AG04449 (cell line): ENCODE measurements at regions of chr5 and their contacts with region 1.

Region 1: GRCh38 chr5:111530298-111530740 is 18.0 kb upstream of the STARD4 start:
- DNase-seq: peak; percentile 68
- H3K4me3 ChIP-seq: no peak overlapping the region
- CTCF ChIP-seq: no peak

Region 2: DNA sequence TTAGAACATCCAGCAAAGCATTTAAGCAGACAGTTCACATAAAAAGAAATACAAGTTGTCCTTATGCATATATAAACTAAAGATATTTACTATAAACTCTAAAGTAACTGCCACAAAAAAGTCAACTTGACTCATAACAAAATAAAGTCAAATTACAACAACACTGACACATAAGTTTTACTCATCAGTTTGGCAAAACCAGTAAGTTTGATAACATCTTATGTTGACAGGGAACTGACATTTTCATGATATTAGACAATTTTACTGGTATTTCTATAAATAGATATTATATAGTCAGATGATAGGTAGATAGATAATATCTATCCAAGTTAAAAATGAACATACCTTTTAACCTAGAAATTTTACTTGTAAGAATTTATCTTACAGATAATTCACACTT is 468.7 kb before region 1 on chr5:
- CTCF ChIA-PET with region 1: no interaction called
- POLR2A ChIA-PET with region 1: no interaction called
- DNase-seq: no peak
- H3K4me3 ChIP-seq: no peak overlapping the region
- CTCF ChIP-seq: no peak

Region 3: GRCh38 chr5:111498346-111498745 is 32.0 kb before region 1 on chr5:
- CTCF ChIA-PET with region 1: interaction called, 14 read pairs
- POLR2A ChIA-PET with region 1: no interaction called
- DNase-seq: no peak
- H3K4me3 ChIP-seq: no peak overlapping the region
- CTCF ChIP-seq: no peak

Region 4: GRCh38 chr5:111512375-111513130 is 17.8 kb before region 1 on chr5 and contains the start of gene STARD4:
- CTCF ChIA-PET with region 1: interaction called, 15 read pairs
- POLR2A ChIA-PET with region 1: no interaction called
- DNase-seq: peak; percentile 80
- H3K4me3 ChIP-seq: peak within 1 kb of the TSS; percentile 87
- CTCF ChIP-seq: no peak

Region 5: GRCh38 chr5:111550279-111551020 is 20.1 kb after region 1 on chr5:
- CTCF ChIA-PET with region 1: interaction called, 34 read pairs
- POLR2A ChIA-PET with region 1: no interaction called
- DNase-seq: peak; percentile 92
- H3K4me3 ChIP-seq: no peak overlapping the region
- CTCF ChIP-seq: peak; percentile 46

Region 6: DNA sequence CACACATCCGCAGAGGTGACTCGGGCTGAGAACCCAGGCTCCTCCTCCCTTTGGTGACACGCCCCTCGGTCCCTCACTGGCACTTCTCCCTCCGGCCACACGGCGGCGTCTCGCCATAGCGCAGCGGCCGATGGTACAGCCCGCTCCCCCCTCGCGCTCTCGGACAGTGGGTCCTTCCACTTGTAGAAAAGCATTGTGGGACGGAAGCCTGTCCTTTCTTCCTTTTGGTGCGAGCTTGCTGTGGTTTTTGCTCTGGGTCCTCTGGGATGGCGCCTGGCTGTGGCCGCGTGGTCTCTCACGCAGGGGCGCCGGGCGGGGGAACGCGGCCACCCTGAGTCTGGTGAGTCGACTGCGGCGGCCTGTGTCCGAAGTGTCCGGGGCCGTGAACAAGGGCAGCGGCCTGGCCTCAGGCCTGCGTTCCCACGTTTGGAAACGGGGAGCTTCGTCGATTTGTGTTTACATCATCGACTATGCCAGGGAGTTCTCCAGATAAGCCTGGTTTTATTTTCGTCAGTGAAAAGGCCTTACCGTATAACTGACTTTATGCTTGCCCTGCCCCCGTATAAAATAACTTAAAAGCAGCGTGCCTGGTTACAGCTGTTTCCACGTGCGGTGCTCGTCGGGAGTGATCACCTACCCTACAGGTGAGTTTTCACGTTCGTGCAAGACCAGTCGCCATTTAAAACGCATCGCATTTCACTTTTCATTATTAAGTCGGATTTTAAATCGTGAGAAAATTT is 630.5 kb after region 1 on chr5:
- CTCF ChIA-PET with region 1: interaction called, 19 read pairs
- POLR2A ChIA-PET with region 1: no interaction called
- DNase-seq: peak; percentile 40
- H3K4me3 ChIP-seq: peak overlapping the region; percentile 95
- CTCF ChIP-seq: peak; percentile 100